ENCODE measurements at regions of chr4 and their contacts with region 1.

Region 1: DNA sequence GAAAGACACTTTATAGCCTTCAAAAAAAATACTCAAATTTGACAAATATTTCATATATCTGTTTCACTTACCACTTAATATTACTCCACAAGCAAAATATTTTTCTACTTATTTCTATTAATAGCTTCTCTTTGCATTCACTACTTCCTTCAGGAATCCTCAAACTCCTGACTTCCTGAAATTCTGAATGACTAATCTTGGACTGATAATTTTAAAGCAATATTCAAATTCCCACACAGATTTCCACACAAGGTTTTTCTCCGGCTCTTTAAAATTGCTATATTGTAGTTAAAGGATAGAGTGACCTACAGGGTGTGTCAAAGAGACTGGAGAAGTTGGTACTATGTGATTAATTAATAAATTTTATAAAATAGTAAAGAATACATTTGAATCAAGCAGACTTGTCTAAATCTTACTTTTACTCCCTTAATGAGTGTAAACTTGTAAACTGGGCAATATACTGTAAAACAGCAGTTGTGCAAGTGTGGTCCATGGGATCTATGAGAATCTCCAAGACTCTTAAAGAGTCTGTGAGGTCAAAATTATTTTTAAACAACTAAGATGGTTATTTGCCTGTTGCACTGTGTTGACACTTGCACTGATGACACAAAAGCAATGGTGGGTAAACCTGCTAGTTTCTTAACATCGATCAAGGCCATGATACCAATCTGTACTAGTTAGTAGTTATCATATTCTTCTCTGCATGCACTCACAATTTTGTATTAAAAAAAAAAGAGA is 44.5 kb downstream of the ANKRD17 start:
- DNase-seq: peak; percentile 14
- ATAC-seq: no peak
- H3K4me3 ChIP-seq: no peak overlapping the region
- H3K27ac ChIP-seq: no peak overlapping the region
- H3K4me1 ChIP-seq: peaks cover 5% of the 10 kb centered on the region
- H3K27me3 ChIP-seq: no peaks in the 10 kb centered on the region
- CTCF ChIP-seq: no peak

Region 2: DNA sequence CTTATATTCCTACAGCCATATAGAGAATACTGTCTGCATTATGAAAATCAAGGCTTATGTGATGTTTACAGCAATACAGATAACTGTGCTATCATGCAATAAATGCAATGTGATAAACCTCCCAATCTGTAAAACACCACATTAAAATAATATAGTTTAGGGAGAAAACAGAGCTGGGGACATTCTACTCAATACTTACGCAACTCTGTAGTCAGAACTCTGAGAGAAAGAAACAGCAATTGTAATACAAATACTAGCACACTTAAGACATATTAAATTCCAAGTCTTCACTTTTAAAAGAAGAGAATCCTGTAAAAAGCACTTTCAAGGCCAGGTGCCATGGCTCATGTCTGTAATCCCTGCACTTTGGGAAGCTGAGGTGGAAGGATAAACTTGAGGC is 16.9 kb before region 1 on chr4:
- CTCF ChIA-PET with region 1: no interaction called
- POLR2A ChIA-PET with region 1: no interaction called
- intact Hi-C with region 1: loop called (anchors 2 kb)
- DNase-seq: no peak
- ATAC-seq: no peak
- H3K4me3 ChIP-seq: no peak overlapping the region
- H3K27ac ChIP-seq: no peak overlapping the region
- H3K4me1 ChIP-seq: peaks cover 5% of the 10 kb centered on the region; the same call in 1 of the 2 replicates
- H3K27me3 ChIP-seq: no peaks in the 10 kb centered on the region
- CTCF ChIP-seq: no peak